CD4-positive, alpha-beta T cell (primary cell): ENCODE measurements at regions of chr2 and their contacts with region 1.

Region 1: DNA sequence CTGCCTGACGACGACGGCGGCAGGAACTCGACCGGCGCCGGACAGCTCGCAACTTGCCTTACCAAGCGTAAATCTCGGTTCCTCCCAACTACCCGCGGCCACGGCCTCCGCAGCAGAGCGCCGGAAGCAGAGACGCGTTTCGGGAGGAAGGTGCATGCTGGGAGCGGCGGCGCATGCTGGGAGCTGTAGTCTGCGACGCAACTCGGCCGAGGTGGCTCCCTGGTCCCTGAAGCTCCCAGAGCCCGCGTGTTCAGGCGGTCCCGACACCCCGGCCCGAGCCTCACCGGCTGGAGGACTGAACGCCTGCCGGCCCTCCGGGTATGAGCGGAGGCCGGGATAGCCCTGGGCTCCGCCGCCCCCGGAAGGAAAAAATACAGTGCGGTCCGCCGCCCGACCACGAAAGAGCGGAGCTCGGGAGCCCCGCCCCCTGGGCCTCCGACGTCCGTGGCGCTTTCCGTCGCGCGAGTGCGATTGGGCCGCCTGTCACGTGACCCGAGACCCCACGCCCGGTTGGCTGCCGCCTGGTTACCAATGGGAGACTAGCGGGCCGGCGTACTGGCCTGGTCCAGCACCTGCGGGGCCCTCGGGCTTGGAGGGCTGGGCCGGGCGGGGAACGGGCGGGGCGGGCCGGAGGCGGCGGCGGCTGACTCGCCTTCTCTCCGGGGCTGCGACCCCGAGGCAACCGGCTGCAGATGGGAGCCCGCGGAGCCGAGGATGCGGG is at the start of gene CAPN10:
- DNase-seq: peak; percentile 92 to 98 (median 95)
- ATAC-seq: peak; percentile 83
- H3K4me3 ChIP-seq: peak within 1 kb of the TSS; percentile 65
- H3K4me3 Mint-ChIP-seq: peak within 1 kb of the TSS; percentile 97
- H3K27ac ChIP-seq: peak within 1 kb of the TSS; percentile 90 to 97
- H3K27ac Mint-ChIP-seq: peak within 1 kb of the TSS; percentile 90
- H3K4me1 ChIP-seq: peaks cover 52% of the 10 kb centered on the region
- H3K4me1 Mint-ChIP-seq: peaks cover 50% of the 10 kb centered on the region
- H3K27me3 ChIP-seq: no peaks in the 10 kb centered on the region
- H3K27me3 Mint-ChIP-seq: no peaks in the 10 kb centered on the region
- CTCF ChIP-seq: no peak
- total RNA-seq, gene CAPN10: 40.6 to 42.1 TPM

Region 2: GRCh38 chr2:240021488-240022104 is 564.8 kb before region 1 on chr2:
- CTCF ChIA-PET with region 1: no interaction called
- POLR2A ChIA-PET with region 1: no interaction called
- intact Hi-C with region 1: loop called in 1 of 2 experiments (anchors 5 kb)
- DNase-seq: peak; percentile 26 to 79 (median 58)
- ATAC-seq: peak; percentile 40
- H3K4me3 ChIP-seq: no peak overlapping the region
- H3K4me3 Mint-ChIP-seq: peak overlapping the region; percentile 54
- H3K27ac ChIP-seq: no peak overlapping the region
- H3K27ac Mint-ChIP-seq: peak overlapping the region; percentile 30
- H3K4me1 ChIP-seq: peaks cover 21% of the 10 kb centered on the region
- H3K4me1 Mint-ChIP-seq: peaks cover 44% of the 10 kb centered on the region
- H3K27me3 ChIP-seq: no peaks in the 10 kb centered on the region
- H3K27me3 Mint-ChIP-seq: no peaks in the 10 kb centered on the region
- CTCF ChIP-seq: peak; percentile 61

Region 3: GRCh38 chr2:240513549-240514287 is 72.6 kb before region 1 on chr2:
- CTCF ChIA-PET with region 1: interaction called, 22 read pairs
- POLR2A ChIA-PET with region 1: interaction called, 7 read pairs
- intact Hi-C with region 1: loop called in 1 of 2 experiments (anchors 1 kb)
- DNase-seq: peak; percentile 76 to 92 (median 80)
- ATAC-seq: peak; percentile 99
- H3K4me3 ChIP-seq: no peak overlapping the region
- H3K4me3 Mint-ChIP-seq: no peak overlapping the region
- H3K27ac ChIP-seq: no peak overlapping the region
- H3K27ac Mint-ChIP-seq: peak overlapping the region; percentile 55
- H3K4me1 ChIP-seq: peaks cover 15% of the 10 kb centered on the region
- H3K4me1 Mint-ChIP-seq: peaks cover 6% of the 10 kb centered on the region
- H3K27me3 ChIP-seq: no peaks in the 10 kb centered on the region
- H3K27me3 Mint-ChIP-seq: no peaks in the 10 kb centered on the region
- CTCF ChIP-seq: peak; percentile 90

Region 4: GRCh38 chr2:240566203-240567136 is 19.9 kb before region 1 on chr2:
- CTCF ChIA-PET with region 1: interaction called, 40 read pairs
- POLR2A ChIA-PET with region 1: interaction called, 224 read pairs
- intact Hi-C with region 1: loop called (anchors 1 kb)
- DNase-seq: peak; percentile 89 to 98 (median 95)
- ATAC-seq: peak; percentile 60
- H3K4me3 ChIP-seq: peak overlapping the region; percentile 87
- H3K4me3 Mint-ChIP-seq: peak overlapping the region; percentile 96
- H3K27ac ChIP-seq: peak overlapping the region; percentile 91 to 97
- H3K27ac Mint-ChIP-seq: peak overlapping the region; percentile 98
- H3K4me1 ChIP-seq: peaks cover 88% of the 10 kb centered on the region
- H3K4me1 Mint-ChIP-seq: peaks cover 84% of the 10 kb centered on the region
- H3K27me3 ChIP-seq: no peaks in the 10 kb centered on the region
- H3K27me3 Mint-ChIP-seq: no peaks in the 10 kb centered on the region
- CTCF ChIP-seq: peak; percentile 86

Region 5: DNA sequence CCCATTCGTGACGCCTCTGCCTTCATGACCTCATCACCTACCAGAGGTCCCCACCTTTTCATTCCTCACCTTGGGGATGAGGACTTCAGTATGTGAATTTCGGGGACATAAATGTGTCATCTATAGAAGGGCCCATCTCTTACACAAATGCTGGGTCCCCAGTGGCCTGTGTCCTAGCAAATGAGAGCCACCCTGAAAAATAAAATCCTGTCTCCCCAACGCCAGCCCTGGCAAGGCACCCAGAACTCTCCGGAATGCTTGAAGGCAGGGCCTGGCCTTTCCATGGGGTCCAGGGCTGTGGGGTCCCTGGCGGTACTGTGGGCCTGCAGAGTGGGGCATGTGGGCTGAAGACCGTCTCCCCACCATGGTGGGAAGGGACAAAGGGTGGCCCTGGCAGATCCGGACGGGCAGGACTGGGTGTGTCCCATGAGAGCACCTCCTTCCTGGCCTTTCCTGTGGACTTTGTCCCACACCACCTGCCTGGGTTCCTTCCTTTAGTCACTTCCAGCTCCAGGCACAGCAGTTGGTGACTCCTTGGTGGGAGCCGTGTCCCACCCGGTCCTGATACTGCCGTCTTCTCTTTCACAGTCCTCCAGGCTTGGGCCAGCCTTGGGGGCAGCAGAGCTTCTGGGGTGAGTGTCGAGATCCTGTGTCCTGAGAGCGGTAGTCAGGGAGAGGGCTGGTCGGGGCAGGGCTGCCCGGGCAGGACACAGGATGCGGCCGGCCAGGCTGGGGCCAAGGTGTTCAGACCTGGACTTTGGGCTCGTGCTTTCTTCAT is 18.8 kb after region 1 on chr2:
- CTCF ChIA-PET with region 1: no interaction called
- POLR2A ChIA-PET with region 1: no interaction called
- intact Hi-C with region 1: no loop called
- DNase-seq: peak in 2 of 14 experiments; percentile 4 to 24
- ATAC-seq: no peak
- H3K4me3 ChIP-seq: no peak overlapping the region
- H3K4me3 Mint-ChIP-seq: no peak overlapping the region
- H3K27ac ChIP-seq: no peak overlapping the region
- H3K27ac Mint-ChIP-seq: no peak overlapping the region
- H3K4me1 ChIP-seq: no peaks in the 10 kb centered on the region
- H3K4me1 Mint-ChIP-seq: no peaks in the 10 kb centered on the region
- H3K27me3 ChIP-seq: no peaks in the 10 kb centered on the region
- H3K27me3 Mint-ChIP-seq: no peaks in the 10 kb centered on the region
- CTCF ChIP-seq: no peak

Region 6: DNA sequence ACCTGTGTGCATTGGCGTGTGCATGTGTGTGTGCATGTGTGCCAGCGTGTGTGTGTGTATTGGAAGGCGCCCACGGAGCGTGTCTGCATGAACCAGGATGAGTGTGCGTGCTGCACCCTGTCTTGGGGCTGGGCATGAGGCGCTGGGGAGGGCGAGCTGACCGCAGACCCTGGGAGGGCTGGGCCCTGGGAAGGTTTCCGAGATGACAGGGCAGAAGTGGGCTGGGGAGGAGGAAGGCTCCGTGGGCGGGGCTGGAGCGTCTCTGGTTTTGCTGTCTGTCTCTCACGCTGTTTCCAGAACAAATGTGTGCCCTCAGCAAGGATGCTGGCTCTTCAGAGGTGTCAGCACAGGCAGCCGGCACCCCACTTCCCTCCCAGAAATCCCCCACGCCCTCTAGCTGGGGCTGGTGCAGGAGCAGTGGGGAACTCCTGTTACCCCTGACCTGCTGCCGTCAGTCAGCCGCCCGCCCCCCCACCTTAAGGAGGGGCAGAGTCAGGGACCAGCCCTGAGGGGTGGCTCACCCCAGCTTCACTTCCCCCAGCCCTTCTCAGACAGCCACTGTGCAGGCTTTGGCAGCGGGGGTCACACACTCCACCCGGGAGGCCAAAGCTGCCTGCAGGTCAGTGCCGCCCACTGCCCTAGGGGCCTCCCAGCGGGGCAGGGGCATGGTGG is 38.7 kb after region 1 on chr2 and contains the start of gene GPR35:
- CTCF ChIA-PET with region 1: interaction called, 3 read pairs
- POLR2A ChIA-PET with region 1: interaction called, 35 read pairs
- intact Hi-C with region 1: loop called in 1 of 2 experiments (anchors 2 kb)
- DNase-seq: peak; percentile 37 to 97 (median 68)
- ATAC-seq: peak; percentile 65
- H3K4me3 ChIP-seq: peak within 1 kb of the TSS; percentile 24
- H3K4me3 Mint-ChIP-seq: peak within 1 kb of the TSS; percentile 36
- H3K27ac ChIP-seq: peak within 1 kb of the TSS; percentile 64 to 66
- H3K27ac Mint-ChIP-seq: peak within 1 kb of the TSS; percentile 87
- H3K4me1 ChIP-seq: peaks cover 99% of the 10 kb centered on the region
- H3K4me1 Mint-ChIP-seq: peaks cover 42% of the 10 kb centered on the region
- H3K27me3 ChIP-seq: no peaks in the 10 kb centered on the region
- H3K27me3 Mint-ChIP-seq: no peaks in the 10 kb centered on the region
- CTCF ChIP-seq: no peak
- total RNA-seq, gene GPR35: 7.1 to 7.2 TPM

Region 7: DNA sequence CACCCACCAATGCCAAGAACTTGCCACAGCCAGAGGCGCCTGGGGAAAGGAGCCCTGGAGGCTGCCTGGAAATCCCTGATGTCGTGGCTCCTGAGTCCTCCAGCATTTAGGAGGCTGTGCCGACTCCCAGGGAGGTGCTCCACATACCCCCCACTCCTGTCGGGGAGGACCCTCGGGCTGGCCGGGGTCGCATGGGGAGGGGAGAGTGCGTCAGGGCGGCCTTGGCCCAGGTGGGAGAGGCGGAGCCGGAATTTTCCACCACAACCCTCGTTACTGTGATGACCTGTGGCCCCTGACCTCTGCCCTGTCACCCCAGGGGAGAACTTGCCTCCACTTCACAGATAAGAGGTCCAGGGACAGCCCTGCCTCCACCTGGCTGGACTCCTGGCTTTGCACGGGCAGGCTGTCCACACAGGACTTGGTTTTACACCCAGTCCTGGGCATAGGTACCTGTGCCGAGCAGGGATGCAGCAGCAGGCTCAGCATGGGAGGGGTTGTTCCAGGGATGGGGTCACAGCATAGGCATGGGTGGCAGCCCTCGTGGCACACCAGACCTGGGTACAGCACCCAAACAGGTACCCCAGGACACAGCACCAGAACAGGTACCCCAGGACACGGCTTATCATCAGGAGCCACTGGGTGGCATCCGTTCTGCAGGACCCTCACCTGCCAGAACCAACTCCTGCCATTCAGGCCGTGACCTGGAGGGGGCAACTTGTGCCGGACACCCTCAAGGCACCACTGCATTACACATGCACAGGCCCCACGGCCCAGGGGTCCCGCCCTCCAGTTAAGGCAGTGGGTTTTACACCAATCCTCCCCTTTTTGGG is 270.0 kb after region 1 on chr2:
- CTCF ChIA-PET with region 1: no interaction called
- POLR2A ChIA-PET with region 1: no interaction called
- intact Hi-C with region 1: no loop called
- DNase-seq: peak in 1 of 14 experiments; percentile 25
- ATAC-seq: no peak
- H3K4me3 ChIP-seq: no peak overlapping the region
- H3K4me3 Mint-ChIP-seq: no peak overlapping the region
- H3K27ac ChIP-seq: no peak overlapping the region
- H3K27ac Mint-ChIP-seq: no peak overlapping the region
- H3K4me1 ChIP-seq: no peaks in the 10 kb centered on the region
- H3K4me1 Mint-ChIP-seq: no peaks in the 10 kb centered on the region
- H3K27me3 ChIP-seq: no peaks in the 10 kb centered on the region
- H3K27me3 Mint-ChIP-seq: no peaks in the 10 kb centered on the region
- CTCF ChIP-seq: no peak

Region 8: DNA sequence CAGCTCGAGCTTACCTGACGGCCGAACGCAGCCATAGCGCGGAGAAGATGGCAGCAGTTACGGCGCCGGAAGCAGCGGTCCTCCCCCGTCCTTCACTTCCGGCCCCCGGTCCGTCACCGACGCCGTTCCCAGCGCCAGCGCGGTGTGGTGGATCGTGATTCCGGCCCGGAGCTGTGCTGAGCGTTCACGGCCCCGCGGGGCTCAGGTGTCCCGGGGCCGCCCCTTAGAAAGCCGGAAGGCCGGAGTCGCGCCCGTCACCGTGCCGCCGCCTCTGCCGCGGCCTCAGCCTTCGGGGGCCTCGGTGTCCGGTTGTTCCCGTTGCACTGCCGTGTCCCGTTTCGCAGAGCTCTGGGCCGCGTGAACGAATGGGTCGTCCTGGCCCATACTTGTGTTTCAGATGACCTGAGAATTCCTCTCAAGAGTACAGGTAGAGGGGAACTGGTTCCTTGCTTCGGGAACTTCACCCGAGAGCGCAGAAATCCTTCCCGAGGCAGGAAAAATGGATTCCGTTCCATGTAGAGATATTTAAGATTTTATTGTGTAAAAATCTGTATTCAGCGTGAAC is 516.0 kb after region 1 on chr2 and contains the start of gene MTERF4:
- CTCF ChIA-PET with region 1: no interaction called
- POLR2A ChIA-PET with region 1: no interaction called
- intact Hi-C with region 1: loop called in 1 of 2 experiments (anchors 10 kb)
- DNase-seq: peak; percentile 79 to 95 (median 88)
- ATAC-seq: peak; percentile 93
- H3K4me3 ChIP-seq: peak within 1 kb of the TSS; percentile 65
- H3K4me3 Mint-ChIP-seq: peak within 1 kb of the TSS; percentile 95
- H3K27ac ChIP-seq: peak within 1 kb of the TSS; percentile 84 to 90
- H3K27ac Mint-ChIP-seq: peak within 1 kb of the TSS; percentile 95
- H3K4me1 ChIP-seq: peaks cover 80% of the 10 kb centered on the region
- H3K4me1 Mint-ChIP-seq: peaks cover 73% of the 10 kb centered on the region
- H3K27me3 ChIP-seq: no peaks in the 10 kb centered on the region
- H3K27me3 Mint-ChIP-seq: no peaks in the 10 kb centered on the region
- CTCF ChIP-seq: no peak
- total RNA-seq, gene MTERF4: 84.0 to 87.5 TPM

Region 9: DNA sequence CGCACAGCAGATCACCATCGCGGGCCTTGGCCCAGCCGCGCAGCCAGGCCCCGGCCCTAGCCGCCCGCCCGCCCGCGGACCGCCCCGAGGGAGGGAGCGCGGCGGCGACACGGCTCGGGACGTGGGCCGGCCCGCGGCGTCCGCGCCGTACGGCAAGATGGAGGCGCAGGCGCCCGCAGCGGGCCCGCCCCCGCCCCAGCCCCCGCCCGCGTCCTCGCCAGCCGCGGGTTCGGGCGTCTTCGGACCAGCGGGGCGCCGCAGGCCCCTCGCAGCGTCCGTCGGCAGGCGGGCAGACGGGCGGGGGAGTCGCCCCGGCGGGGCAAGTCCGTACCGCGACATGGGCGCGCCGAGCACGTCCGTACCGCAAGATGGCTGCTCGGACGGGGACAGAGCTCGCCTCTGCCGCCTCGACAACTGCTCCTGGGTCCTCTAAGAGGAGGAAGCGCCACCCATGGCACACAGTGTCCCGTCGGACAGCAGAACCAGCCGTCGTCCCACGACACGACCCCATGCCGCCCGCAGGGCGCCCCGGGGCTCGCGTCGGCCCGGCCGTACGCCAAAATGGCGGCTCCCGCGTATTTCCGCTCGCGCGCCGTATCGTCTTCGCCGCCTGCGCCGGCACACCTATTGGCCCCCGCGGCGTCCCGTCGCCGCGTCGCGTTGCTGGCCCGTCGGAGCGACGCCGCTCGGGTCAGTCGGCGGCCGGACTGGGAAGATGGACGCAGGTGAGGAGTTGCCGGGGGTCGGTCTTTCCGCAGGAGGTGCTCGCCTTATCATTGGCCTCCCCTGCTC is 1050.8 kb after region 1 on chr2 and contains the starts of genes ATG4B and THAP4:
- CTCF ChIA-PET with region 1: no interaction called
- POLR2A ChIA-PET with region 1: no interaction called
- intact Hi-C with region 1: loop called in 1 of 2 experiments (anchors 10 kb)
- DNase-seq: peak; percentile 52 to 89 (median 68)
- ATAC-seq: peak; percentile 66
- H3K4me3 ChIP-seq: peak within 1 kb of the TSS; percentile 76
- H3K4me3 Mint-ChIP-seq: peak within 1 kb of the TSS; percentile 95
- H3K27ac ChIP-seq: peak within 1 kb of the TSS; percentile 82 to 93
- H3K27ac Mint-ChIP-seq: peak within 1 kb of the TSS; percentile 84
- H3K4me1 ChIP-seq: peaks cover 45% of the 10 kb centered on the region
- H3K4me1 Mint-ChIP-seq: peaks cover 56% of the 10 kb centered on the region
- H3K27me3 ChIP-seq: no peaks in the 10 kb centered on the region
- H3K27me3 Mint-ChIP-seq: no peaks in the 10 kb centered on the region
- CTCF ChIP-seq: no peak
- total RNA-seq, gene ATG4B: 86.5 to 89.4 TPM
- total RNA-seq, gene THAP4: 27.5 to 31.4 TPM